ENCODE measurements at regions of chr10 and their contacts with region 1.

Region 1: DNA sequence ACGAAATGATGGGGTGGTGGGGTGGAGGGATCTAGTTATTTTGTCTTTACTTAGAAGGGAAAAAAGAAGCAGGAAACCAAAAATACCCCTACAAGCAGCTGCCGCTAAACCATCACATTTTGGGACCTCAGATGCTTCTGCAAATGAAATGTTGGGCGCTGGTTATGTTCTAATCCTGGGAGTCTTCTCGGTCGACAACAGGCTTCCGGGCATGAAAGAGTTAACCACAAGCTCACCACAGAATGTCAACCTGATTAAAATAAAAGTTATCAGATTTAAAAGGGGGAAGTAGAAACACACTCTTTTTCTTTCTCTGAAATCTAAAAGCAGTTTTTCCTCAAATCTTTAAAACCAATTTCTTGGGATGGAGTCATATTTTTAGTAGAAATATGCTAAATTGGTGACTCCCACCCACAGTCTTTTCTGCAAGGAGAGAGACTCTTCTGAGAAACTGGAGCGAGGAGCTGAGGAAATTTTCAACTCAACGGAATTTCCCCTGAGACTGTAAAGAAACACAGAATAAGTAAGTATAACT is 16.8 kb downstream of the IL2RA start:
- DNase-seq: no peak
- H3K4me3 Mint-ChIP-seq: peak overlapping the region; percentile 58
- H3K27ac Mint-ChIP-seq: peak overlapping the region; percentile 85
- H3K4me1 Mint-ChIP-seq: peaks cover 88% of the 10 kb centered on the region
- H3K27me3 Mint-ChIP-seq: no peaks in the 10 kb centered on the region

Region 2: DNA sequence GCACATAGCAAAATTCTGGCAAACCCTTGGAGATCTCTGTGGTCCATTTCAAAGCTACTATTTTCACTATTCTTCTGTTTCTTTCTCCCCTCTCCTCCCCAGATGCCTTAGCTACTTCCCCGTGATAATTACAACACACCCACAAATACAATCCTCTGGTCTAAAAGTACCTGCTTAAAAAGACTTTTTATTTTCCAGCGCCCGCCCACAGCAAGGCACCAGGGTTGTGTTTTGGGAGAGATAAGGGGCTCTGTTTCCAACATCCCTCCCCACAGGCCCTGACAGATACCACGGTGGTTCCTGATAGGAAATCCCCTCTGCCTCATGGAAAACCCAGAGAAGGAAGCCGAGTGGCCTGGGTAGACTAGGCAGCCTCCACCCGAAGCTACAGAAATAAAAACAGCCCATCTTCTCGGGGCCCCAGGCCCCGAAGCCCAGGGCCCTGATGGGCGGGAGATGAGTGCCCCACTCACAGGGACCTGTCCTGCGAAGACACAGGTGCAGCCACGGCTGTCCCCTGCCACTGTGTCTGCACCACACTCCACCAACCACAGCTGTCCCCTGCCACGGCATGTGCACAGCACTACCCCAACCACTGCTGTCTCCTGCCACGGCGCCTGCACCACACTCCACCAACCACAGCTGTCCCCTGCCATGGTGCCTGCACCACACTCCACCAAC is 565.8 kb before region 1 on chr10:
- CTCF ChIA-PET with region 1: no interaction called
- POLR2A ChIA-PET with region 1: no interaction called
- DNase-seq: no peak
- H3K4me3 Mint-ChIP-seq: no peak overlapping the region
- H3K27ac Mint-ChIP-seq: no peak overlapping the region
- H3K4me1 Mint-ChIP-seq: no peaks in the 10 kb centered on the region
- H3K27me3 Mint-ChIP-seq: peaks cover 3% of the 10 kb centered on the region

Region 3: DNA sequence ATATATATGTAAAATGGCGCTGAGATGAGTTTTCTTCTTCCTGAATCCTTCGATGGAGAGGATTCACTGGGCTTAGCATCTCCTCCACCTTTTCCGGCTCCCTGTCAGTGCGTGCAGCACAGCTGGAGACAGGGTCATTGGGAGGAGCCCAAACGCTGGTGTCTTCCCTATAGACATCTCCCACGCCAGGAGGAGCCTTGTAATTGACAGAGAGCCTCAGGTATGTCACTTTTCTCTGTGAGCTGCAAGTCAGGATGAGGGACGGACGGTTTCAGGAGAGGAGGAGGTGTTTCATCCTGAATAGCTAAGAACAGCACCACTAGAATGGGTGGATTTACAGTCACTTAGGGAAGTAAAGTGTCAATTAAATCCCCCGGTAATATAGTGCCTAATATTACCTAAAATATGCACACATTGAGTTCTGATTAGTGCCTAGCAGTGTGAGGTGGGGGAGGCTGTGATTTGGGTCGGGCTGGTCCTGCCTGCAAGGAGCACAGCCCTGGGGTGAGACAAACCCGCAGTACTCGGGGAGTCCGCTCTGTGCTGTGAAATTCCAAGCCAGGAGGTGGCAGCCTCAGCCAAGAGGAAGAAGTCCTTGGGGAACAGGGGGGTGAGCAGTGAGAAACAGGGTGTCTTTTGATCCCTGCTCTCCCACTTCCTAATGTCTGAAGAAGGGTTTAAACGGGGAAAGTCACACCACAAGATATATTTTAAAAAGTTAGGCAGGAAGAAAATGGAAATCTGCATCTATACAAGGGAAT is 96.2 kb before region 1 on chr10:
- CTCF ChIA-PET with region 1: no interaction called
- POLR2A ChIA-PET with region 1: no interaction called
- DNase-seq: peak; percentile 33
- H3K4me3 Mint-ChIP-seq: no peak overlapping the region
- H3K27ac Mint-ChIP-seq: no peak overlapping the region
- H3K4me1 Mint-ChIP-seq: peaks cover 7% of the 10 kb centered on the region
- H3K27me3 Mint-ChIP-seq: no peaks in the 10 kb centered on the region

Region 4: DNA sequence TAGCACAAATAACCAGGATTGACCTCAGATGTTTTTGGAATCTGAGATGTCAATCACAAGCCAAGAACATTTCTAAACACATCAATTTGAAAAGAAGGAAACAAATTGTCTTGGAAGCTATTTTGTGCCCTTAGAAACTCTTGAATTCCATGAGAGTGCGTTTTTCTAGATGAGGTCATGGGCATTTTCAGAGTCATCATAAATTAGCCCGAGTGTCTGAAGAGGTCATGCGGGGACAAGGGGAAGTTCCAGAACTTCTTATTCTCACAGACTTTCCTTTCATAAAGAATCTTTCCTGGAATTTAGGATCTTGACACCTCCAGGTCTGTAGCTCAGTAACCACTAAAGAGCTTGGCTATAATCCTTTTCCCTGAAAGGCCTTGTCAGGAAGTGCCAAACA is 11.4 kb before region 1 on chr10:
- CTCF ChIA-PET with region 1: interaction called, 11 read pairs
- POLR2A ChIA-PET with region 1: interaction called, 90 read pairs
- DNase-seq: no peak
- H3K4me3 Mint-ChIP-seq: no peak overlapping the region
- H3K27ac Mint-ChIP-seq: peak overlapping the region; percentile 48
- H3K4me1 Mint-ChIP-seq: peaks cover 74% of the 10 kb centered on the region
- H3K27me3 Mint-ChIP-seq: no peaks in the 10 kb centered on the region

Region 5: DNA sequence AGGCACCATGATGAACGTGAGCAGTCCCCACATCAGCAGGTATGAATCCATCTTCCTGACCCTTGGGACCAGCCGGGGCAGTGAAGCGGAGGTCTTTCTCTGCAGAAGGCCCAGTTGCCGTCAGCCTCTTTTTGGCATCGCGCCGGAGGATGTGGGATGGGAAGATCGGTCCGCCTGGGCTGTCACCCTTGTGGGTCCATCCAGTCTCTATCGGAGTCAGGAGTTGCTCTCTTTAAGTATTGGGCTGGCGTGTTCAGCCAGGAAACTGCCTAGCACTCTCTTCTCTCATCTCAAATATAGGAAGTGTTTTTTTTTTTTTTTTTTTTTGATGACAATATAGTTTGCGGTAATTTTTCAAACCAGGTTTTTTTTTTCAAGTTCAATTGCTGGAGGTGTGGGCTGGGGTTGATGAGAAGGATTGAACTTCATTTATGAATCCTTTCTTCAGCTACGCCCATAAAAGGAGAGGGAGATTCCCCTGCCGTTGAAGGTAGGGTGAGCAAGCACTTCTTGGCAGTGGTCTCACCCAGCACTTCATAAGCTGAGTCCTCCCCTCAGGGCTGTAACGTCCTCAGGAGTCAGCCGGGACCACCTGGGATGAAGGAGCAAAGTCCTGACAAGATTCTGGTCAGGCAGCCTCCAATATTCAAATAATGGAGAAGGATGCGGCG is 16.9 kb after region 1 on chr10 and contains the start of gene IL2RA:
- CTCF ChIA-PET with region 1: interaction called, 4 read pairs
- POLR2A ChIA-PET with region 1: interaction called, 448 read pairs
- DNase-seq: peak; percentile 77
- H3K4me3 Mint-ChIP-seq: peak within 1 kb of the TSS; percentile 90
- H3K27ac Mint-ChIP-seq: peak within 1 kb of the TSS; percentile 90
- H3K4me1 Mint-ChIP-seq: peaks cover 71% of the 10 kb centered on the region
- H3K27me3 Mint-ChIP-seq: no peaks in the 10 kb centered on the region
- total RNA-seq, gene IL2RA: 437 to 446 TPM

Region 6: DNA sequence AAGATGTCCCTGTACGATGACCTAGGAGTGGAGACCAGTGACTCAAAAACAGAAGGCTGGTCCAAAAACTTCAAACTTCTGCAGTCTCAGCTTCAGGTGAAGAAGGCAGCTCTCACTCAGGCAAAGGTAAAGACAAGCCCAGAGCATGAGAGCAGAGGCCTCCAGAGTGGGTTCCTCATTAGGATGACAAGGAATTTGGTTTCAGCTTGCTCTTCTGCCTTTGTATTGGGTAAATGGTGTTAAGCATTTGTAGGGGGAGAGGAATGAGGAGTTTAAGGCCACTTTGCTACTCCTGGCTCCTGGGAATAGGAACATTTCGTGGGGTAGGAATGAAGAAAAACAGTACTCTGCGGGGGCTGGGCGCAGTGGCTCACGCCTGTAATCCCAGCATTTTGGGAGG is 51.7 kb after region 1 on chr10:
- CTCF ChIA-PET with region 1: no interaction called
- POLR2A ChIA-PET with region 1: no interaction called
- DNase-seq: no peak
- H3K4me3 Mint-ChIP-seq: no peak overlapping the region
- H3K27ac Mint-ChIP-seq: peak overlapping the region; percentile 33
- H3K4me1 Mint-ChIP-seq: peaks cover 54% of the 10 kb centered on the region
- H3K27me3 Mint-ChIP-seq: no peaks in the 10 kb centered on the region

Region 7: GRCh38 chr10:6163364-6164270 is 118.2 kb after region 1 on chr10:
- CTCF ChIA-PET with region 1: no interaction called
- POLR2A ChIA-PET with region 1: no interaction called
- DNase-seq: peak; percentile 93
- H3K4me3 Mint-ChIP-seq: peak overlapping the region; percentile 87
- H3K27ac Mint-ChIP-seq: peak overlapping the region; percentile 93
- H3K4me1 Mint-ChIP-seq: peaks cover 50% of the 10 kb centered on the region
- H3K27me3 Mint-ChIP-seq: no peaks in the 10 kb centered on the region

Measured in activated CD4-positive, alpha-beta memory T cell treated with anti-CD3 and anti-CD28 coated beads, Interleukin-2, amount 10 ng/mL, durations not matched to agents 7 days and 5 days (primary cell).